OCI-LY7 (cell line): ENCODE measurements at regions of chr3 and their contacts with region 1.

Region 1: GRCh38 chr3:67654099-67654843 is at the start of gene SUCLG2:
- DNase-seq: peak; percentile 87
- H3K4me3 ChIP-seq: peak within 1 kb of the TSS; percentile 78
- H3K27ac ChIP-seq: peak within 1 kb of the TSS; percentile 81
- H3K4me1 ChIP-seq: peaks cover 59% of the 10 kb centered on the region
- CTCF ChIP-seq: no peak; the same call in 1 of the 2 replicates
- total RNA-seq, gene SUCLG2: 28.3 and 29.4 TPM in 2 replicates

Region 2: DNA sequence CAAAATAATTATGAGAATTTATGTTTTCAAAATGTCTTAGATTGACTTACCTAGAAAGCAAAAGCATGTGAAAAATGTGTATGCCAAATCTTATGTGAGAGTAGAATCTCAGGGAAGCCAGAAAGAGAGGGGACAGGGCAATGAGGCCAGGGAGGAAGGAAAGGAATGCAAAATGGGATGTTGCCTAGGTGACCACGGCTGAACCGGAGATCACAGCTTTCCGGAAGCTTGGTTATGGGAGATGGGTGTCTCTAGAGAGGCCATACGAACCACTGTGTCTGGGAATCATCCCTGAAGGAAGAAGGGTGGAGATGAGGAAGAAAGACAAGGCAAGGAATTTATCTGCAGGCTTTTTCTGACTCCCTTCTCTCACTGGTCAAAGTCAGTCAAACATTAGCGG is 75.9 kb before region 1 on chr3:
- CTCF ChIA-PET with region 1: no interaction called
- POLR2A ChIA-PET with region 1: no interaction called
- intact Hi-C with region 1: no loop called
- DNase-seq: no peak
- H3K4me3 ChIP-seq: no peak overlapping the region
- H3K27ac ChIP-seq: no peak overlapping the region
- H3K4me1 ChIP-seq: no peaks in the 10 kb centered on the region
- CTCF ChIP-seq: no peak

Region 3: GRCh38 chr3:67678665-67679064 is 24.4 kb after region 1 on chr3:
- CTCF ChIA-PET with region 1: interaction called, 5 read pairs
- POLR2A ChIA-PET with region 1: interaction called, 16 read pairs
- intact Hi-C with region 1: loop called (anchors 1 kb)
- DNase-seq: peak; percentile 88
- H3K4me3 ChIP-seq: peak overlapping the region; percentile 41
- H3K27ac ChIP-seq: peak overlapping the region; percentile 95
- H3K4me1 ChIP-seq: peaks cover 54% of the 10 kb centered on the region
- CTCF ChIP-seq: no peak

Region 4: GRCh38 chr3:67685499-67685898 is 31.2 kb after region 1 on chr3:
- CTCF ChIA-PET with region 1: no interaction called
- POLR2A ChIA-PET with region 1: interaction called, 16 read pairs
- intact Hi-C with region 1: loop called (anchors 2 kb)
- DNase-seq: peak; percentile 88
- H3K4me3 ChIP-seq: peak overlapping the region; percentile 51
- H3K27ac ChIP-seq: peak overlapping the region; percentile 96
- H3K4me1 ChIP-seq: peaks cover 57% of the 10 kb centered on the region
- CTCF ChIP-seq: no peak

Region 5: DNA sequence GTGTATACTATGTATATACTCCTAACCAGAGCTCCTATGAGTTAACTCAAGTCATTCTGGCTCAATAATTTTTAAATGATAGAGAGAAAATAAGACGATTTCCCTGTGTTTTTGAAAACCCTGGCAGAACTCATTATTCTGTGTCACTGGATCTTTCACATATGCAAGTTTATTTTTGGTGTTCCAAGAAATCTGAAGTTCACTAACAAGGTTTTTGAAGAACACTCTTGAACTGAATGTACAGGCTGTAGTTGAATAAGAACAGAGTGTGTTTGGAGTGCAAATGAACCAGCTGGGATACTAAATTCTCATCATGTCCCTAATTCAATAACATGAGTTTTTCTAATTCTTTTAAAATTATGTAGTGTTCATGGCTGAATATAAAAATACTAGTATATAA is 467.0 kb after region 1 on chr3:
- CTCF ChIA-PET with region 1: no interaction called
- POLR2A ChIA-PET with region 1: no interaction called
- intact Hi-C with region 1: no loop called
- DNase-seq: no peak
- H3K4me3 ChIP-seq: no peak overlapping the region
- H3K27ac ChIP-seq: no peak overlapping the region
- H3K4me1 ChIP-seq: no peaks in the 10 kb centered on the region
- CTCF ChIP-seq: no peak